GM12878 (cell line): ENCODE measurements at regions of chr7 and their contacts with region 1.

Region 1: GRCh38 chr7:27196287-27196767 is 3.6 kb downstream of the HOXA13 start:
- DNase-seq: peak; percentile 16
- ATAC-seq: peak; percentile 68
- H3K4me3 ChIP-seq: no peak overlapping the region
- H3K27ac ChIP-seq: no peak overlapping the region
- H3K4me1 ChIP-seq: no peaks in the 10 kb centered on the region; the same call in 1 of the 2 replicates
- H3K27me3 ChIP-seq: peaks cover 22 to 40% of the 10 kb centered on the region in 2 experiments
- CTCF ChIP-seq: peak; percentile 70 to 89 (median 74)
- EP300 ChIP-seq: no peak
- POLR2A ChIP-seq: no peak
- RAD21 ChIP-seq: peak; percentile 94

Region 2: DNA sequence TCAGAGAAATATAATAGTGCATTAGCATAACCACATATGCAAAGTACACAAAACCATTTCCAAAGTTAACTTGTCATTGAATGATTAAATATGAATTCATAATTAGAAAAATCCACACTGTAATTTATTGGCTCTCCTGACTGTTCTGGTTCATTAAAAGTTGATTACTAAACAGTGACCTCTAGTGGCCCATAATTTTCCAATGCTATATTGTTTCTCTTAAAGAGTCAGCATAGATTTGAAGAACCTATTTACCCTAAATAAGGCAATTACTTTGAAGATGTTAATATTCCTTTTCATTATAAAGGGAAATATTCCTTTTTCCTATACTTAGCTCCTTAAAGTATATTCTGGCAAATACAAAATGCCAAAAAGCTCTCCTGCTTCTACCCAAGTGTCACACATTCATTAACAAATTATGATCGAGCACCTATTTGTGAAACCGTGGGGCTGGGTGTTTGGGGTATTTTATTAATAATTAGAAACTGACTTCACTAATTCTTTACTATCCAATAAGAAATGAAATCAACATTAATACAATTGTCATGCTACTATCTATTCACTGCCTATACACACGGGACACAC is 380.1 kb after region 1 on chr7:
- CTCF ChIA-PET with region 1: interaction called, 41 read pairs
- POLR2A ChIA-PET with region 1: no interaction called
- RAD21 ChIA-PET with region 1: interaction called, 9 read pairs
- SMC1A ChIA-PET with region 1: interaction called, 16 read pairs
- in situ Hi-C with region 1: loop called (anchors 5 kb)
- intact Hi-C with region 1: loop called (anchors 1 kb)
- DNase-seq: no peak
- ATAC-seq: peak; percentile 76
- H3K4me3 ChIP-seq: no peak overlapping the region
- H3K27ac ChIP-seq: no peak overlapping the region
- H3K4me1 ChIP-seq: no peaks in the 10 kb centered on the region
- H3K27me3 ChIP-seq: no peaks in the 10 kb centered on the region
- CTCF ChIP-seq: peak; percentile 48 to 55 (median 53); a peak in 5 of 6 replicates
- EP300 ChIP-seq: no peak
- POLR2A ChIP-seq: no peak
- RAD21 ChIP-seq: peak; percentile 59

Region 3: DNA sequence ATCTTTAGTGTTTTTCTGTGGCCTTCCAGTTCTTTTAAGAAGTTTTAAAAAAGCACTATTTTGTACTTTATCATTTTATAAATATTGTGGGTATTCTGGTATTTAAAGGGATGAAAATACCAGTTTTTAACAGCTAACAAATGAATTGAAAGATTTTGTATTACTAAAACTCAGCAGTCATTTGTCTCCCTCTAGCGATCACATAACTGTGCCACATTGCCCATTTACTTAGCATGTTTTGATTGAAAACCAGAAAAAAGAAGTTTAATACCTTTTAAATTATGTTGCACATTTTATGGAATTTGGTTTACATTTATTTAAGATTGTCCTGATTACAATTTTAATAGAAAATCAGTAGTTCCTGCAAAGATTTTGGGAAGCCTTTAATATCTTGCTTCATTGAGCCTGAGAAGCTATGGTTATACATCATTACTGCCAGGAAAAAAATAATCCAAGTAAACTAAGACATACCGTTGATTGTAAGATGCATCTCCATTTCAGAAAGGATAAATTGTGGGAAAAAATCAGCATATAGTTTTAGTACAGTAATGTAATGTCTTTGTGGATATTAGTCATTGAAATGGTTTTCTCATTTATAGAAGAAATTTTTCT is 578.5 kb after region 1 on chr7:
- CTCF ChIA-PET with region 1: interaction called, 32 read pairs
- POLR2A ChIA-PET with region 1: no interaction called
- RAD21 ChIA-PET with region 1: interaction called, 29 read pairs
- SMC1A ChIA-PET with region 1: interaction called, 22 read pairs
- in situ Hi-C with region 1: loop called (anchors 5 kb)
- intact Hi-C with region 1: loop called (anchors 5 kb)
- DNase-seq: no peak
- ATAC-seq: peak; percentile 52; the same call in 1 of the 3 replicates
- H3K4me3 ChIP-seq: no peak overlapping the region
- H3K27ac ChIP-seq: no peak overlapping the region
- H3K4me1 ChIP-seq: no peaks in the 10 kb centered on the region
- H3K27me3 ChIP-seq: no peaks in the 10 kb centered on the region
- CTCF ChIP-seq: peak; percentile 57 to 61 (median 57); a peak in 5 of 6 replicates
- EP300 ChIP-seq: no peak
- POLR2A ChIP-seq: no peak
- RAD21 ChIP-seq: peak; percentile 50

Region 4: DNA sequence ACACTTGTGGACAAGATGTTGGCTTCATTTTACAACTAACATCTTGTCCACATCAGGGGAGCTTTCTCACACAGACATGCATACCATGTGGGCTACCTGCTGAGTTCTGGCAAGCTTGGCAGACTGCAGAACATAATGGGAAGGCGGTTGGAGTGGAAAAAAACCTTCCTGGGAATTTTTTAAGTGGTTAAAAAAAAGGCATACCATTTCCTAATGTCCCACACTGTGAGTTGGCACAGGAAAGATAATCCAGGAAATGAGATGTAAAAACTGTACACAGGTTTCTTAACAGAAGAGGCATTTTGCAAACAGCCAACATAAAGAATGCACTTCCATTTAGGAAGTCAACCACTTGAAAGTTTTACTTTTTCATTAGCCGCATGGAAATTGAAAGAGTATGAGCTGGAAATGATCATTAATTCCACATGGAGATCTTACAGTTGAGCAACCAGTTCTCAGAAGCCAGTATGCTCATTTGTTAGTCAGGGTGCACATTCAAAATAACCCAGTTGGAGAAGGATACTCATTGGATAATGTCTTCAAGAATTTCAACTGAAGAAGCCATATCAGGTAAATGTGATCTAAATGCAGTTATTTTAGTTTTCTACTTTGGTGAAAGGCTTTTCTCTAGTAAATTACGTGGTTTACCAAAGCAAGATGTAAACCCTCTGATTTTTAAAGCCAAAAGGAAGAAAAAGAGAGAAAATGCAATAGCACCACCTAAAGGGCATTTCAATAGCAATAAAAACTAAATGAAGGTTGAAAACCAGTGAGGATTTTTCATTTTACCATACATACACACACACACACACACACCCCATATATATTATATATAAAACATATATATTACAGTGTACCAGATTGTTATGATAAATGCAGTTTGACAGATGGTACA is 737.6 kb after region 1 on chr7:
- CTCF ChIA-PET with region 1: interaction called, 18 read pairs
- POLR2A ChIA-PET with region 1: no interaction called
- RAD21 ChIA-PET with region 1: interaction called, 5 read pairs
- SMC1A ChIA-PET with region 1: interaction called, 7 read pairs
- in situ Hi-C with region 1: no loop called
- intact Hi-C with region 1: no loop called
- DNase-seq: no peak
- ATAC-seq: no peak
- H3K4me3 ChIP-seq: no peak overlapping the region
- H3K27ac ChIP-seq: no peak overlapping the region
- H3K4me1 ChIP-seq: no peaks in the 10 kb centered on the region
- H3K27me3 ChIP-seq: no peaks in the 10 kb centered on the region
- CTCF ChIP-seq: peak; percentile 18 to 51 (median 28); a peak in 4 of 6 replicates
- EP300 ChIP-seq: no peak
- POLR2A ChIP-seq: no peak
- RAD21 ChIP-seq: peak; percentile 49

Region 5: GRCh38 chr7:28062197-28062991 is 866.1 kb after region 1 on chr7:
- CTCF ChIA-PET with region 1: interaction called, 16 read pairs
- POLR2A ChIA-PET with region 1: no interaction called
- RAD21 ChIA-PET with region 1: interaction called, 6 read pairs
- SMC1A ChIA-PET with region 1: no interaction called
- in situ Hi-C with region 1: no loop called
- intact Hi-C with region 1: no loop called
- DNase-seq: no peak
- ATAC-seq: peak; percentile 96
- H3K4me3 ChIP-seq: no peak overlapping the region
- H3K27ac ChIP-seq: no peak overlapping the region
- H3K4me1 ChIP-seq: no peaks in the 10 kb centered on the region
- H3K27me3 ChIP-seq: peaks cover 0 to 4% of the 10 kb centered on the region in 2 experiments; a peak in 2 of 4 replicates
- CTCF ChIP-seq: peak; percentile 70 to 82 (median 79)
- EP300 ChIP-seq: no peak
- POLR2A ChIP-seq: no peak
- RAD21 ChIP-seq: peak; percentile 59

Region 6: DNA sequence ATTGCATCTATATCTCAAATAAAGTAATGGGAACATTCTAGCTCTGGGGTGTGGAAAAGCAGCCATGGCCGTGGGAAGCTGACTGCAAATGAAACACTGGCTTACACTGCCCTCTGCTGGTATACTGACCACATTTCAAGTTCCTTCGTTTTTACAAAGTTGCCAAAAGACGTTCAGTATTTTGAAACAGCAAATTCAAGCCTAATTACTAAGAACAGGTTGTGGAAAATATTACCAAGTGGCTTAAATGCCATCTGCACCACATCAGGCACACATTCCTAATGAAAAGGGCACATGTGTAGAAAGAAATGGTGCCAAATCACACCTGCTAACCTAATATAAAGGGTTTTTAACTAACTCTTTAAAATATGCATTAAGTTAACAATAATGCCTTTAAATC is 900.4 kb after region 1 on chr7:
- CTCF ChIA-PET with region 1: interaction called, 8 read pairs
- POLR2A ChIA-PET with region 1: no interaction called
- RAD21 ChIA-PET with region 1: interaction called, 3 read pairs
- SMC1A ChIA-PET with region 1: interaction called, 8 read pairs
- in situ Hi-C with region 1: no loop called
- intact Hi-C with region 1: loop called (anchors 5 kb)
- DNase-seq: peak; percentile 12
- ATAC-seq: peak; percentile 67
- H3K4me3 ChIP-seq: no peak overlapping the region
- H3K27ac ChIP-seq: no peak overlapping the region
- H3K4me1 ChIP-seq: no peaks in the 10 kb centered on the region
- H3K27me3 ChIP-seq: no peaks in the 10 kb centered on the region; a peak in 1 of 4 replicates
- CTCF ChIP-seq: peak; percentile 73 to 78 (median 74)
- EP300 ChIP-seq: no peak
- POLR2A ChIP-seq: no peak
- RAD21 ChIP-seq: peak; percentile 74